ENCODE measurements at regions of chr1 and their contacts with region 1.

Region 1: DNA sequence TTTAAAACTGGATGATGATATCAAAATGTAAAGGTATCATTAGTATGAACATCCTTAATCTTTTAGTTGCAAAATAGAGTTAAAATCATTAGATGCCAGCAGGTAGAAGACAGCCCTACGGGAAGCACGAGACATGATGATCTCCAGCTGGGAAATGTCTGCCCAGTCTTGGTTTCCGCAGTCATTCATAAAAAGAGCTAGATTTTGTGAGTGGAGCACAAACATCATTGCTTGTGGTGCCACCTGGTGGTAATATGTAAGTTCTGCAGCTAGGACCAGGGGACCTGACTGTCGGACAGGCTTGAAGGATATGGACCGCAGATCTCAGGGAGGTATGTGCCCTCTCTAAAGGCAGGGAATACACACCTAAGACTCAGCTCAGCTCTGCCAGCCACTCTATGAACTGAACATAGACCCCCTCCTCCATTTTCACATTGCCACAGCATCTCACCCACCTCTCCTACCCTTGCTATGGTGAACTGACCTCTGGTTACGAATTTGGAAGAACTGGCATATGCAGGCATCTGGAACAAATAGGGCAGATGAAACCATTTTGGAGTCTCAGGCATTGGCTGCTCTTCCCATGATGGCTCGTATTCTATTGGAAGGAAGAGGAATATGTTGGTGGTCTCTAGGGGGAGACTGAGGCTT is 9.2 kb downstream of the FCMR start:
- DNase-seq: peak; percentile 80
- H3K4me3 ChIP-seq: no peak overlapping the region
- H3K27ac ChIP-seq: no peak overlapping the region
- H3K4me1 ChIP-seq: no peaks in the 10 kb centered on the region
- H3K27me3 ChIP-seq: peaks cover 29% of the 10 kb centered on the region
- CTCF ChIP-seq: peak; percentile 79

Region 2: GRCh38 chr1:206635080-206635977 is 277.2 kb before region 1 on chr1 and contains the start of gene DYRK3:
- CTCF ChIA-PET with region 1: interaction called, 10 read pairs
- POLR2A ChIA-PET with region 1: no interaction called
- intact Hi-C with region 1: loop called (anchors 1 kb)
- DNase-seq: peak; percentile 96
- H3K4me3 ChIP-seq: peak within 1 kb of the TSS; percentile 96
- H3K27ac ChIP-seq: peak within 1 kb of the TSS; percentile 69
- H3K4me1 ChIP-seq: peaks cover 38% of the 10 kb centered on the region
- H3K27me3 ChIP-seq: no peaks in the 10 kb centered on the region
- CTCF ChIP-seq: no peak; the same call in 1 of the 2 replicates
- total RNA-seq, gene DYRK3: 18.7 and 24.0 TPM in 2 replicates

Region 3: GRCh38 chr1:206734499-206735142 is 177.9 kb before region 1 on chr1:
- CTCF ChIA-PET with region 1: interaction called, 16 read pairs
- POLR2A ChIA-PET with region 1: no interaction called
- intact Hi-C with region 1: loop called (anchors 5 kb)
- DNase-seq: peak; percentile 45
- H3K4me3 ChIP-seq: no peak overlapping the region
- H3K27ac ChIP-seq: no peak overlapping the region
- H3K4me1 ChIP-seq: no peaks in the 10 kb centered on the region
- H3K27me3 ChIP-seq: no peaks in the 10 kb centered on the region
- CTCF ChIP-seq: peak; percentile 67

Region 4: GRCh38 chr1:206865013-206865671 is 47.4 kb before region 1 on chr1 and contains the start of gene IL20:
- CTCF ChIA-PET with region 1: interaction called, 3 read pairs
- POLR2A ChIA-PET with region 1: no interaction called
- intact Hi-C with region 1: loop called (anchors 2 kb)
- DNase-seq: peak; percentile 82
- H3K4me3 ChIP-seq: no peak within 1 kb of the TSS
- H3K27ac ChIP-seq: no peak within 1 kb of the TSS
- H3K4me1 ChIP-seq: no peaks in the 10 kb centered on the region
- H3K27me3 ChIP-seq: peaks cover 39% of the 10 kb centered on the region
- CTCF ChIP-seq: peak; percentile 94
- total RNA-seq, gene IL20: not detected in 2 replicates

Region 5: DNA sequence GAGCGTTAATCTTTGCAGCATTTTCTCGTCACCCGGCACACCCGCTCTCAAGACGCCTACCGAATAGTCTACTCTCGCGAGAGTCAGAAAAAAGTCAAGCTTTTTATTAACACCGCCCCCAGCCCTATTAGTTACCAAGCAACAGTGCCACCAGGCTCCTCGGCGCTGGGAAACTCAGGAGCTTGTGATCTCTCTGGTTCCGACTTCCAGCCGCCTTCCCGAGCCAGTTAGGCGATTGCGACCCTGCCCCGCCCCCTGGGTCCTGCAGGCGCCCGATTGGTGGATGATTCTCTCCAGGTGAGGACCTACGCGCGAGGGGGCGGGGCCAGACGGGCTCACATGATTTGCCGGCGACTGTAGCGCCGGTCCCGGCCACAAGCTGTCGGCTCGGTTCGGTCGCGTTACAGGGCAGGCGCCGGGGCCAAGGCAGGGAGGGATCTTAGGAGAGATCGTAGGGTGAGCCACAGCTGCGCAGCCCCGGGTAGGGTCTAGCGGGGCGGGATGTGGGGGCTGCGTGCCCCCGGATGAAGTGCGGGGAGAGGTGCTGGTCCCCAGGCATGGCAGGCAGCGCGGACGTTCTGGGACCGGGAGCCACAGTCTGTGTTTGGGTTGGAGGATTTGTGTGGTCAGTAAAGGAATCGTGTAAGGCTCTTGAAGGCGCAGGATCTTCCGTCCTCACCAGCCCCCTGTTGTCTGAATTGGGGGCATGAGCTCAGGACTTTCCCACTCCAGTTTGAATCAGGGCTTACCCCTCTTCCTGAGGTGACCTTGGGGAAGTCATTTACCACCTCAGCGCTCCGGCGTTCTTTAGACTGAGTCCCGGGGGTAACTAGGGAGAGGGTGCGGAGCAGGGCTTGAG is 140.6 kb after region 1 on chr1 and contains the start of gene PFKFB2:
- CTCF ChIA-PET with region 1: no interaction called
- POLR2A ChIA-PET with region 1: no interaction called
- intact Hi-C with region 1: no loop called
- DNase-seq: peak; percentile 97
- H3K4me3 ChIP-seq: peak within 1 kb of the TSS; percentile 61
- H3K27ac ChIP-seq: peak within 1 kb of the TSS; percentile 37
- H3K4me1 ChIP-seq: peaks cover 18% of the 10 kb centered on the region
- H3K27me3 ChIP-seq: no peaks in the 10 kb centered on the region
- CTCF ChIP-seq: no peak
- total RNA-seq, gene PFKFB2: 7.6 and 8.5 TPM in 2 replicates

Region 6: GRCh38 chr1:207499573-207499972 is 587.0 kb after region 1 on chr1:
- CTCF ChIA-PET with region 1: no interaction called
- POLR2A ChIA-PET with region 1: no interaction called
- intact Hi-C with region 1: loop called (anchors 2 kb)
- DNase-seq: peak; percentile 78
- H3K4me3 ChIP-seq: no peak overlapping the region
- H3K27ac ChIP-seq: no peak overlapping the region
- H3K4me1 ChIP-seq: no peaks in the 10 kb centered on the region
- H3K27me3 ChIP-seq: peaks cover 93% of the 10 kb centered on the region
- CTCF ChIP-seq: peak; percentile 87

Measured in A673 (cell line).